WTC11 (cell line): ENCODE measurements at regions of chr1 and their contacts with region 1.

Region 1: GRCh38 chr1:15046487-15047165 is 106.9 kb upstream of the TMEM51 start:
- DNase-seq: peak; percentile 91
- ATAC-seq: peak; percentile 91
- H3K4me3 Mint-ChIP-seq: no peak overlapping the region
- H3K27ac Mint-ChIP-seq: no peak overlapping the region; the same call in 1 of the 2 replicates
- H3K4me1 Mint-ChIP-seq: no peaks in the 10 kb centered on the region
- H3K27me3 Mint-ChIP-seq: no peaks in the 10 kb centered on the region
- CTCF ChIP-seq: peak; percentile 89

Region 2: DNA sequence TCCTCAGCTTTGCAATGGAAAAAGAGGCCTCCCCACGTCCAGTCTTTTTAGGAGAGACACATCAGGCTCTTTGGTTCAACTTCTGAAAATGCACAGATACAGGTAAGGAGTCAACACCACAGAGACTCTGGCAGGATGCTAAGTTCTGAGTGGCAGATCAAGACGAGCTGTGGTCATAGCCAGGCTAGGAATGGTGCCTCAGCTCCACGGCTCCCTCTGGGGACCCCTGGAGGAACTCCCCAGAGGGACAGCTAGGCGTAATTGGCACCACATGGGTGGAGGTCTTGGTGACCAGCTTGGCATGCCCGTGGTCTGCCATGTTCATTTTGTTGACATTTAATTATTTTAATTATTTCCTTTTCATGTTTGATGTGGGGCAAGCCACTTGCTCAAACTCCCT is 242.0 kb before region 1 on chr1:
- CTCF ChIA-PET with region 1: interaction called, 10 read pairs
- POLR2A ChIA-PET with region 1: no interaction called
- DNase-seq: peak; percentile 58
- ATAC-seq: peak; percentile 91
- H3K4me3 Mint-ChIP-seq: no peak overlapping the region
- H3K27ac Mint-ChIP-seq: no peak overlapping the region
- H3K4me1 Mint-ChIP-seq: no peaks in the 10 kb centered on the region
- H3K27me3 Mint-ChIP-seq: no peaks in the 10 kb centered on the region; the same call in none of the 2 replicates
- CTCF ChIP-seq: peak; percentile 56

Region 3: GRCh38 chr1:15028102-15028501 is 18.5 kb before region 1 on chr1:
- CTCF ChIA-PET with region 1: interaction called, 15 read pairs
- POLR2A ChIA-PET with region 1: no interaction called
- DNase-seq: no peak
- ATAC-seq: no peak
- H3K4me3 Mint-ChIP-seq: no peak overlapping the region
- H3K27ac Mint-ChIP-seq: no peak overlapping the region
- H3K4me1 Mint-ChIP-seq: peaks cover 51% of the 10 kb centered on the region
- H3K27me3 Mint-ChIP-seq: no peaks in the 10 kb centered on the region
- CTCF ChIP-seq: no peak

Region 4: DNA sequence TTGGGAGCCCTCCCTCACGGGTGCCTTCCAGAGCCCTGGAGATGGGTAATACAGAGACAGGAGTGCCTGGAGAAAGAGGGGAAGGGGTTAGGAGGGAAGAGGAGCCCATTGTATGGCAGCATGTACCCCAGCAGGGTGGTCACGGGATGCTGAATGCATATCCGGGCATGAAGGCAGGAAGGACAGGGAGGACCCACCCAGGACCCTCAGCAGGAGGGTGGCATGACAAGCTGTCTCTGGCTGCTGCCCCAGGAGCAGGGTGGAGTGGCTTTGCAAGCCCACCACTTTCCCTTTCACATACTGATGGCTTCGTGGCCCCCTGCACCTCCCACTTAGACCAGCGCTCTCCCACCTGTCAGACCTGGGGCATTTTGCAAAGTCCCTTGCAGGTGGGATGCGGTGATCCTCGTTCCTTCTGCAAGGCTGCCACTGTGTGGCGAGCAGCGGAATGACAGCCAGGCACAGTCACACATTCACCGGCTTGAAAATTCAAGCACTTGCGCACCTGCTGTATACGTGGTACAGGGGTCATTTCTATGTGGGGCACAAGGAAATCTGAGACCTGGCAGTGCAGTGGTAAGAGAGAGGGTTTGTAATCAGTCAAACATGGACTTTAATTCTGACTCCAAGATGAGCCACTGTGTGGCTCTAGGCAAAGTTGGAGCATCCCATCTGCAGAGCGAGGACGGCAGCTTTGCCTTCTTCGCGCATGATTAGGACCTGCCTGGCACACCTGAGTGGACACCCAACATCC is 53.7 kb after region 1 on chr1:
- CTCF ChIA-PET with region 1: interaction called, 11 read pairs
- POLR2A ChIA-PET with region 1: no interaction called
- DNase-seq: peak; percentile 84
- ATAC-seq: peak; percentile 89
- H3K4me3 Mint-ChIP-seq: no peak overlapping the region
- H3K27ac Mint-ChIP-seq: no peak overlapping the region
- H3K4me1 Mint-ChIP-seq: peaks cover 28% of the 10 kb centered on the region
- H3K27me3 Mint-ChIP-seq: peaks cover 25% of the 10 kb centered on the region
- CTCF ChIP-seq: peak; percentile 92